Activated T-helper 2 cell treated with anti-CD3 and anti-CD28 coated beads, Interferon-gamma antibody, Interleukin-2, Interleukin-4, amounts not matched to agents 10 μg/mL and 5 μg/mL and 100 μg/mL, durations not matched to agents 14 hours and 24 hours and 36 hours (primary cell): ENCODE measurements at regions of chr6 and their contacts with region 1.

Region 1: GRCh38 chr6:16471222-16471909 is 233.0 kb downstream of the GMPR start:
- DNase-seq: no peak
- H3K4me3 Mint-ChIP-seq: peak overlapping the region; percentile 35
- H3K27ac Mint-ChIP-seq: peak overlapping the region; percentile 87
- H3K4me1 Mint-ChIP-seq: peaks cover 68% of the 10 kb centered on the region
- H3K27me3 Mint-ChIP-seq: no peaks in the 10 kb centered on the region

Region 2: GRCh38 chr6:16398587-16398986 is 72.8 kb before region 1 on chr6:
- intact Hi-C with region 1: loop called (anchors 2 kb)
- DNase-seq: no peak
- H3K4me3 Mint-ChIP-seq: no peak overlapping the region
- H3K27ac Mint-ChIP-seq: no peak overlapping the region
- H3K4me1 Mint-ChIP-seq: peaks cover 37% of the 10 kb centered on the region
- H3K27me3 Mint-ChIP-seq: no peaks in the 10 kb centered on the region

Region 3: GRCh38 chr6:16409531-16410441 is 61.6 kb before region 1 on chr6:
- intact Hi-C with region 1: no loop called
- DNase-seq: peak; percentile 26
- H3K4me3 Mint-ChIP-seq: no peak overlapping the region
- H3K27ac Mint-ChIP-seq: peak overlapping the region; percentile 62
- H3K4me1 Mint-ChIP-seq: peaks cover 54% of the 10 kb centered on the region
- H3K27me3 Mint-ChIP-seq: no peaks in the 10 kb centered on the region

Region 4: GRCh38 chr6:16438718-16439591 is 32.4 kb before region 1 on chr6:
- intact Hi-C with region 1: loop called (anchors 5 kb)
- DNase-seq: no peak
- H3K4me3 Mint-ChIP-seq: no peak overlapping the region
- H3K27ac Mint-ChIP-seq: peak overlapping the region; percentile 32
- H3K4me1 Mint-ChIP-seq: peaks cover 60% of the 10 kb centered on the region
- H3K27me3 Mint-ChIP-seq: no peaks in the 10 kb centered on the region

Region 5: DNA sequence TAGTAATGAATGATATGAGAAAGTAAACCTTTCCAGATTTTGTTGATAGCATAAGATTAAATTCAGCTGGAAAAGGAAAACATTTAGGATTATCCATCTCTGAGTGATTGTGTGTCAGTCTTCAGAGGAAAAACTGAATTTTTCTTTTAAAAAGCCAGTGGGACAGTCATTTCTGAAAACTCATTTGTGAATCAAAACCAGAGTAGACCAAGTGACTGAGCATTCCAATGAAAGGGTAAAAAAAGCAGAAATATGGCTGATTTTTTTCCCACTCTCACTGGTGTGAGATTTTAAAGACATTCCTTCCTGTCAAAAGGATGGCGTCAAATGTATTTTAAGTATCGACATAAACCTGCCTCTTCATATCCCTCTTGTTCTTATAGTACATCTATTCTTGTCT is 19.0 kb before region 1 on chr6:
- intact Hi-C with region 1: loop called (anchors 2 kb)
- DNase-seq: no peak
- H3K4me3 Mint-ChIP-seq: no peak overlapping the region
- H3K27ac Mint-ChIP-seq: no peak overlapping the region
- H3K4me1 Mint-ChIP-seq: peaks cover 24% of the 10 kb centered on the region
- H3K27me3 Mint-ChIP-seq: no peaks in the 10 kb centered on the region

Region 6: DNA sequence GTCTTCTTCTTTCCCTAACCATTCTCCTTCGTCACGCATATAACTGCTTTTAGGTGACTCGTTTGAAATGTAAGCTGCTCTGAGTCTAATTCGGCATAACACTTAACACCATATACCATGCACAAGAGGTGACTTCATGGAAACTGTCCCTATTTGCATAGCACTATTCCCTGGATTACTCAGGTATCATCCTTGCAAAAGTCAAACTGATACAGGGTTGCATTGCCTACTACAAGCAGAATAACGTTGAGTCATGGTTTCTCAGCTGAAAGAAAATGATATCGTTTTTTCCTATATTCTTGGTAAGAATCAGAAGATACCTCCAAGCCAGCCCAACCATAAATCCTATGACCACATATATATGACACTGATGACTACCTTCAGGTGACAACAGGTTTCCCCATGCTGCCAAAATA is 62.4 kb after region 1 on chr6:
- intact Hi-C with region 1: loop called (anchors 2 kb)
- DNase-seq: no peak
- H3K4me3 Mint-ChIP-seq: no peak overlapping the region
- H3K27ac Mint-ChIP-seq: peak overlapping the region; percentile 52
- H3K4me1 Mint-ChIP-seq: peaks cover 36% of the 10 kb centered on the region
- H3K27me3 Mint-ChIP-seq: no peaks in the 10 kb centered on the region